Activated T-helper 2 cell treated with anti-CD3 and anti-CD28 coated beads, Interferon-gamma antibody, Interleukin-2, Interleukin-4, amounts not matched to agents 10 μg/mL and 5 μg/mL and 100 μg/mL, durations not matched to agents 14 hours and 24 hours and 36 hours (primary cell): ENCODE measurements at regions of chr6 and their contacts with region 1.

Region 1: DNA sequence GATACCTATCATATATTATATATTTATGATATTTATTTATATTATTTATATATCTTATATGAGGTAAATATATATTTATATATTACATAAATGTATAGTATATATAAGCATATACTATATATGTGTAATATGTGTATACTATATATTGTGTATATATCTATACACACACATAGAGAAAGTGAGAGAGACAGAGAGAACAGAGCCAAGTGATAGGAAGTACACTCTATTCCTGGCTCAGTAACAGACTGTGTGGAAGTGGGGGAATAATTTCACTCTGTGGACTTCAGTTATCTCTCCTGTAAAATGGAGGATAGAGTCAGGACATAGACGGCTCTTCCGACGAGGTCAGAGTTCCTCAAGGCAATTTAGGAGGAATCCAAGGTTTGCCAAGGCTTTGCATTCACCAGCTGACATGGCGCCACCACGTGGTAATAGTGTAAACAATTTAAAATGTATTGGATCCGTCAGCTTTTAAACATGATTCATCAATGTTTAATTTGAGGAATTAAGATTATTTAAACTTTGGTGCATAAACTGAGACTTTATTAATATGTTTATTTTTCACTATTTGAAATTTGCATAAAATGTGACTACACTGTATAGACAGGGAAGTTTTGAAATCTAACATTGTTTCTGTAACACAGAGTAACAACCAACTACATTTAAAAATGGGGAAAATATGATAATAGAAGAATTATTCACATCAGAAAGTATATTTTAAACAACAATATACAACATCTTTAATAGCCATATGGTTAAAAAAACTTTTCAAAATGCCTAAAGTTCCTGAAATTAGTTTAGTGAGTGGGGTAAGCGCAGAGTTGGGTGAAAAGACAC is 75.4 kb upstream of the TMEM244 start:
- DNase-seq: no peak
- H3K4me3 Mint-ChIP-seq: no peak overlapping the region
- H3K27ac Mint-ChIP-seq: no peak overlapping the region
- H3K4me1 Mint-ChIP-seq: peaks cover 2% of the 10 kb centered on the region
- H3K27me3 Mint-ChIP-seq: peaks cover 27% of the 10 kb centered on the region

Region 2: DNA sequence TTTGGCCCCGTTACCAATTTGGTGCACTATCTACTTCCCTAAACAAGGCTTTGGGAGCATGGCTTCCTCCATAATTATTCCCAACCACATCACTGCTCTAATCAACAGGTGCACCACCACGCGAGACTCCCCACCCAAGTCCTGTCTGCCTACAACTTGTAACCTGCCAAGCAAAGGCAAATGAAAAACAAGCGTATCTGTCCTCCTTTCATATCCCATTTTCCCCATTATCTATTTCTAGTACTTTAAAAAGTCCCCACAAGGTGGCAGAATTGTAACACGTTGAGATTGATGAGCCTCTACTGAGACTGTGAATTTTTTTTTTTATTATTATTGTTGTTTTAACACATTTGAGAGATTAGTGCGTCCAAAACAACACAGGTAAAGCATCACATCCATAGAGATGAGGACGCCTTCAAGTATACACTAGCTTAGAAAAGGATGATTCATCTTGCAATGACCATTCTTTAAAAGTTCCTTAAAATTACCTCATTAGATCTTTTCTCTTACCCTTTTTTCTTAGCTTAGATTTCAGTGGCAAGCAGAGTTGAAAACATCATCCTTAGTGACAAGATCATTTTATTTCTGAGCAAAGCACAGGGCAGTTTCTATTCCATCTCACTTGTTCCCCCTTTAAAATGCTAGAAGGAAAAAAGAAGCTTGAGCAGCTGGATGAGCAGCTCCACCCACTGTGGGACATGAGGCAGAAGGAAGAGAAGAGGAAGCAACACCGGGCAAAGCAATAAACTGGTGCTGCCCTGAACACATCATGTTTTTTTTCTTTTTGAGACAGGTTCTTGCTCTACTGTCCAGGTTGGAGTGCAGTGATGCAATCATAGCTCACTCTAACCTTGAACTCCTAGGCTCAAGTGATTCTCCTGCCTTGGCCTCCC is 437.4 kb before region 1 on chr6:
- intact Hi-C with region 1: loop called (anchors 5 kb)
- DNase-seq: no peak
- H3K4me3 Mint-ChIP-seq: peak overlapping the region; percentile 36
- H3K27ac Mint-ChIP-seq: peak overlapping the region; percentile 0
- H3K4me1 Mint-ChIP-seq: peaks cover 48% of the 10 kb centered on the region
- H3K27me3 Mint-ChIP-seq: no peaks in the 10 kb centered on the region

Region 3: GRCh38 chr6:129598244-129599187 is 338.0 kb before region 1 on chr6:
- intact Hi-C with region 1: loop called (anchors 1 kb)
- DNase-seq: no peak
- H3K4me3 Mint-ChIP-seq: no peak overlapping the region
- H3K27ac Mint-ChIP-seq: no peak overlapping the region
- H3K4me1 Mint-ChIP-seq: peaks cover 3% of the 10 kb centered on the region
- H3K27me3 Mint-ChIP-seq: no peaks in the 10 kb centered on the region

Region 4: DNA sequence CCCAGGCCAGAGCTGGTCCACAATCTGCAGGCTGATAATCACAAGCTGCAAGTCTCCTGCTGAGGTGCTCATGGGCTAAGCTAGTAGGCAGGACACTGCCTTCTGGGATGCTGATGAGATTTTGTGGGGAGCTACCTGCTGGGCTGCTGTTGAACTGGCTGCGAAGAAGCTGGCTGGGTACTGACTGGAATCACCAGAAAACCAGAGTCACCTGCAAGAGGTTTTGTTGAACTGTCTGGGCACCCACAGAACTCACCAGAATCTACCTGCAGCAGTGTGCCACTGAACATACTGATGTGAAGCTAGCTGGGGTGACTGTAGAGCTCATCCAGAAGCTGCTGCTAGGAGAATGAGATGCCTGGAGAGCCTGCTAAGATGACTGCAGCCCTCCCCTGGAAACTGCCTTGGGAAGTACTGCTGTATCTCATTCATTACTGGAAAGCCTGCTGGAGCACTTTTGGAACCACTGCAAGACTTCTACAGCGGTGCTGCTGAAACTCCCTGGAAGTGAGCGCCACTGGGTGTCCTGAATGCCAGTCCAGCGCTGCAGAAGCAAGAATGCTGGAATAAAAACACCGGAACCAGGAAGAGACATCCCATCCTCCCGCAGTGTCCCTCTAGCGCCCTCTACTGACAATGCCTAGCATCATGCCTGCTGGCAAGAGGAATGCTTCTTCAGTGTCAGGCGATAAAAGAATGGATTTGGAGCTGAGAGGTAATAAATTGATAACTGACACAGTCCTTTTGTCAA is 161.7 kb before region 1 on chr6:
- intact Hi-C with region 1: loop called (anchors 10 kb)
- DNase-seq: peak; percentile 23
- H3K4me3 Mint-ChIP-seq: no peak overlapping the region
- H3K27ac Mint-ChIP-seq: no peak overlapping the region
- H3K4me1 Mint-ChIP-seq: no peaks in the 10 kb centered on the region
- H3K27me3 Mint-ChIP-seq: peaks cover 28% of the 10 kb centered on the region

Region 5: DNA sequence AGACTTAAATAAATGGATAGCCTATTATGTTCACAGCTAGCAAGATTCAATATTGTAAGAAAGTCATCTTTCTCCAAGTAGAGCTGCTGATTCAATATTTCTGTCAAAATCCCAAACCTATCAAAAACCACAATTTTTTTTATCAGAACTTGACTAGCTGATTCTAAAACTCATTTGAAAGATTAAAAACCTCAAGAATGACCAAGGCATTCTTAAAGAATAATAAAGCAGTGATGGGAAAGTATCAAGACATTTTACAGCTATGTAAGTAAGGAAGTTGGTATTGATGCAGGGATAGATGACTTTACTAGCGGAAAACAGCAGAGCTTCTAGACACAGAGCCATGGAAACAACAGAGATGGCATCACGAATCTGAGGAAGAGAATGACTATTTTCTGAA is 221.5 kb after region 1 on chr6:
- intact Hi-C with region 1: no loop called
- DNase-seq: no peak
- H3K4me3 Mint-ChIP-seq: no peak overlapping the region
- H3K27ac Mint-ChIP-seq: no peak overlapping the region
- H3K4me1 Mint-ChIP-seq: no peaks in the 10 kb centered on the region
- H3K27me3 Mint-ChIP-seq: no peaks in the 10 kb centered on the region